ENCODE measurements at regions of chr13 and their contacts with region 1.

Region 1: GRCh38 chr13:95156208-95156607 is 145.0 kb downstream of the ABCC4 start:
- DNase-seq: no peak
- H3K4me3 ChIP-seq: no peak overlapping the region
- H3K27ac ChIP-seq: no peak overlapping the region
- H3K4me1 ChIP-seq: peaks cover 0 to 10% (median 3%) of the 10 kb centered on the region in 4 experiments; a peak in 3 of 7 replicates
- H3K27me3 ChIP-seq: peaks cover 0 to 3% (median under 1%) of the 10 kb centered on the region in 4 experiments; a peak in 4 of 7 replicates
- CTCF ChIP-seq: peak in 2 of 3 experiments; percentile 3 to 4; a peak in 1 of 4 replicates
- EP300 ChIP-seq: no peak
- POLR2A ChIP-seq: no peak
- RAD21 ChIP-seq: peak; percentile 57 to 64

Region 2: DNA sequence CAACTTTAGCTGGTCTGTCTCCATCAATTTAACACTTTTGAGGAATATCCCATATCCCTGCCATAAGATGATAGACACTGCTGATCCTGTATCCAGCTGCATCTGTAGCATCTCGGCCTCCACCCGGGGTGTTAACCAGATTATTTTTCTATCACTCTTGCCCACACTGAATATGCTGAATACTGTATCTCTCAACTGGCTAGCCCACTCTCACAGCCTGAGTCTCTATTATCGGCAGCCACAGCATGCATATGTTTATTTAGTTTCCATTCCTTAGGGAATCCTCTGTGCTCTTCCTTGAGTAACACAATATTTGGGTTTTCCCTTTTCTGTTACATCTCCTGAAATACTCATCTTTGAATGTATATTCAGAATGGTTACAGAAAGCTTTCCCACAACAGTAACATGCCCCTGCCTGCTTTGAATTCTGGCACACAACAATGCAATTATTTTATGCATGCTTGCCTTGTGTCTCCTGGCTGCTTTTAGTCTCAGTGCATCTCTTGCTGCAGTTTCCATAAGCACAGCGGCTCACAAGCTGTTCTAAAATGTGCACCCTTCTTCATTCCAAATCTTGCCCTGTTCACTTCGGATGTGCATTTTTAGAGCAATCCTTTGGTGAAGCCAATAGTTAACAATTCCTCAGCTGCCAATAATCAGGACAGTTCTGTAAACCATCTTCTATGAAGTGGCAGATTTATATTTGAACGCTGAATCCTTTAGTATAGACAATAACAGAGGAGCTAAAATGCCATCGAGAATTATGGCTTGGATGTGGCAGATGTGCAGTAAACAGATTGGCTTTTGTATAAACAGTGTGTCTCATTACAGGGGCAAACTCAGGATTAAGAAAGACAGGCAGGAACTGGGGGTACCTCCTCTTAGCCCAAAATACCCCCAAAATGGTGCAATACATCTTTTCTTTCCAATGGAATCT is 181.9 kb before region 1 on chr13:
- CTCF ChIA-PET with region 1: interaction called, 13 read pairs
- POLR2A ChIA-PET with region 1: no interaction called
- DNase-seq: no peak
- H3K4me3 ChIP-seq: no peak overlapping the region
- H3K27ac ChIP-seq: no peak overlapping the region
- H3K4me1 ChIP-seq: peaks cover 0 to 14% (median 6%) of the 10 kb centered on the region in 4 experiments; a peak in 4 of 7 replicates
- H3K27me3 ChIP-seq: no peaks in the 10 kb centered on the region
- CTCF ChIP-seq: no peak
- EP300 ChIP-seq: no peak
- POLR2A ChIP-seq: no peak
- RAD21 ChIP-seq: no peak

Measured in H1 (cell line).